CD4-positive, alpha-beta T cell (primary cell): ENCODE measurements at regions of chr2 and their contacts with region 1.

Region 1: GRCh38 chr2:116747103-116747502 is 1067.4 kb upstream of the DDX18 start:
- DNase-seq: no peak
- ATAC-seq: no peak
- H3K4me3 ChIP-seq: no peak overlapping the region
- H3K4me3 Mint-ChIP-seq: no peak overlapping the region
- H3K27ac ChIP-seq: no peak overlapping the region
- H3K27ac Mint-ChIP-seq: no peak overlapping the region
- H3K4me1 ChIP-seq: no peaks in the 10 kb centered on the region
- H3K4me1 Mint-ChIP-seq: no peaks in the 10 kb centered on the region
- H3K27me3 ChIP-seq: no peaks in the 10 kb centered on the region
- H3K27me3 Mint-ChIP-seq: no peaks in the 10 kb centered on the region
- CTCF ChIP-seq: no peak

Region 2: GRCh38 chr2:116761864-116762263 is 14.8 kb after region 1 on chr2:
- CTCF ChIA-PET with region 1: no interaction called
- POLR2A ChIA-PET with region 1: no interaction called
- intact Hi-C with region 1: loop called in 1 of 2 experiments (anchors 2 kb)
- DNase-seq: no peak
- ATAC-seq: no peak
- H3K4me3 ChIP-seq: no peak overlapping the region
- H3K4me3 Mint-ChIP-seq: no peak overlapping the region
- H3K27ac ChIP-seq: no peak overlapping the region
- H3K27ac Mint-ChIP-seq: no peak overlapping the region
- H3K4me1 ChIP-seq: no peaks in the 10 kb centered on the region
- H3K4me1 Mint-ChIP-seq: no peaks in the 10 kb centered on the region
- H3K27me3 ChIP-seq: no peaks in the 10 kb centered on the region
- H3K27me3 Mint-ChIP-seq: no peaks in the 10 kb centered on the region
- CTCF ChIP-seq: no peak